CD8-positive, alpha-beta T cell (primary cell): ENCODE measurements at regions of chr1 and their contacts with region 1.

Region 1: DNA sequence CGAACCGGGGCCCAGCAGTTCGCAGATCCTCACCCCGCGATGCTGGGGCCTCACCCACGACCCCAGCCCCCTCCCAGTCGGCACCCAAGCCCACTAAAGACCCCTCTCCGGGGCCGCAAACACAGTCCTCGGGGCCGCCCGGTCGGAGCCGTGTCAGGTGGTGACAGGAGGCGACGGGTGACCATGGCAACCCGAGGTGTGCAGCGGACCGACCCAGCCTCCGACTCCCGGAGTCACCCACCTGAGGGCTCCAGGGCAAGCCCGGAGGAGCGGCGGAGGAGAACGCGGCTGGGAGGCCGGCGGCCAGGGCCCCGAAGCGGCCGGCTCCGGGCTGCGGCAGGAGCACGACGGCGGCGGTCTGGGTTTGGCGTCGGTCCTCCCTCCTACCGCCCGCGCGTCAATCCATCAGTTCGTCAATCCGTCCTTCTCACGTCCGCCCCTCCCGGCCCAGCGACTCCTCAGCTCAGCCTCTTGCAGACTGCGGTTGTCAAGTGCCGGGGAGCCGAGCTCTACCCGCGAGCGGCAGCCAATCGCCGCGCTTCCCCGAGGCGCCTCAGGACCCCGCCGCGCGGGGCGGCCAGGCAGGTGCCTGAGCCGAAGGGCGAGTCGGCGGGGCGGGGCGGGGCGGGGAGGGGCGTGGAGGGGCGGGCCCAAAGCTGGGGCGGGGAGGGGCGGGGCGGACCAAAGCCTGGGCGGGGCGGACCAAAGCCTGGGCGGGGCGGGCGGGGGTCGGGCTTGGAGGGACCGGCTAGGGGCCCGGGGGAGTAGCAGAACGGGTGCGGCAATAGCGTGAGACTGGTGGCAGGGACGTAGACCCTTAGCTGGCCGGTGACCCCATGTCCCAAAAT is at the start of gene WDR47:
- DNase-seq: peak; percentile 92 to 99 (median 96)
- ATAC-seq: peak; percentile 96
- H3K4me3 ChIP-seq: peak within 1 kb of the TSS; percentile 97 to 99
- H3K4me3 Mint-ChIP-seq: peak within 1 kb of the TSS; percentile 93
- H3K27ac ChIP-seq: peak within 1 kb of the TSS; percentile 81 to 94
- H3K27ac Mint-ChIP-seq: peak within 1 kb of the TSS; percentile 92
- H3K4me1 ChIP-seq: peaks cover 10% of the 10 kb centered on the region
- H3K4me1 Mint-ChIP-seq: peaks cover 16% of the 10 kb centered on the region
- H3K27me3 ChIP-seq: no peaks in the 10 kb centered on the region
- H3K27me3 Mint-ChIP-seq: no peaks in the 10 kb centered on the region
- CTCF ChIP-seq: no peak
- total RNA-seq, gene WDR47: 31.5 to 32.6 TPM

Region 2: DNA sequence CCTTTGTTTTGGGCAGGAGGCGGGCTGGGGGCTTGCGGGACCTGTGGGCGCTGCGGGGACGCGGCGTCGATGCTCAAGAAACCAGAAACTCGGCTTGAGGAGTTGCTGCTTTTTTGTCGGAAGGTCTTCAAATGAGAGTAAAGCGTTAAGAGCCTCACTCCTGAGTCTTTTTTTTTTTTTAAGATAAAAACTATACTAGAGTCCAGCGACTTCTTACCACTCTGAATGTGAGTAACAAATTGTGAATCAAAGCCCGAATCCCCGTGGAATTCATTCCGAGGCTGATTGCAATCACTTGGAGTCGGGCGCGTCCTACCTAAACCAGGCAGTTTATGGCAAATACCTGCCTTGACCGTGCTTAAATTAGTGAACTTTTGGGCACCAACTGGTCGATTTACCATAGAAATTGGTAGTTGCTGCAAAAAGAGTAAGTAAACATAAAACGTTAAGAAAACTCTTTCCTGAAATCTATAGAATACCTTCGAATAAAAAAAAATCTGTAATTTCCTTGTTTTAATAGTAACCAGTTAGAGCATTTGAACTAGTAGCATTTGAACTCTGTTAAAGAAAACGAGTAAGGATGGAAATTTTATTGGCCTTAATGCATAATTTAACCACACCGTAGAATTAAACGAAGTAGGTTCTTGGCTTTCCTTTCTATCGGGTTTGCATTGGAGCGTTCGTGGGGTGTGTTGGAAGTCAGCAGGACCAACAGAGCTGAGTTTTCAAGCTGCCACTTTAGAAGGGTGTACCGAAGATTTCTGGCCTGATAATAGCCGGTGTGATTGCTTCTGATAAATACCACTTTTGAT is 164.3 kb before region 1 on chr1:
- CTCF ChIA-PET with region 1: no interaction called
- POLR2A ChIA-PET with region 1: no interaction called
- intact Hi-C with region 1: loop called in 1 of 2 experiments (anchors 2 kb)
- DNase-seq: peak in 2 of 9 experiments; percentile 14 to 19
- ATAC-seq: no peak
- H3K4me3 ChIP-seq: peak overlapping the region; percentile 69 to 80
- H3K4me3 Mint-ChIP-seq: peak overlapping the region; percentile 95
- H3K27ac ChIP-seq: peak overlapping the region; percentile 18 to 24
- H3K27ac Mint-ChIP-seq: peak overlapping the region; percentile 46
- H3K4me1 ChIP-seq: peaks cover 6% of the 10 kb centered on the region
- H3K4me1 Mint-ChIP-seq: peaks cover 12% of the 10 kb centered on the region
- H3K27me3 ChIP-seq: peaks cover 0 to under 1% of the 10 kb centered on the region in 2 experiments
- H3K27me3 Mint-ChIP-seq: peaks cover 4% of the 10 kb centered on the region
- CTCF ChIP-seq: no peak

Region 3: DNA sequence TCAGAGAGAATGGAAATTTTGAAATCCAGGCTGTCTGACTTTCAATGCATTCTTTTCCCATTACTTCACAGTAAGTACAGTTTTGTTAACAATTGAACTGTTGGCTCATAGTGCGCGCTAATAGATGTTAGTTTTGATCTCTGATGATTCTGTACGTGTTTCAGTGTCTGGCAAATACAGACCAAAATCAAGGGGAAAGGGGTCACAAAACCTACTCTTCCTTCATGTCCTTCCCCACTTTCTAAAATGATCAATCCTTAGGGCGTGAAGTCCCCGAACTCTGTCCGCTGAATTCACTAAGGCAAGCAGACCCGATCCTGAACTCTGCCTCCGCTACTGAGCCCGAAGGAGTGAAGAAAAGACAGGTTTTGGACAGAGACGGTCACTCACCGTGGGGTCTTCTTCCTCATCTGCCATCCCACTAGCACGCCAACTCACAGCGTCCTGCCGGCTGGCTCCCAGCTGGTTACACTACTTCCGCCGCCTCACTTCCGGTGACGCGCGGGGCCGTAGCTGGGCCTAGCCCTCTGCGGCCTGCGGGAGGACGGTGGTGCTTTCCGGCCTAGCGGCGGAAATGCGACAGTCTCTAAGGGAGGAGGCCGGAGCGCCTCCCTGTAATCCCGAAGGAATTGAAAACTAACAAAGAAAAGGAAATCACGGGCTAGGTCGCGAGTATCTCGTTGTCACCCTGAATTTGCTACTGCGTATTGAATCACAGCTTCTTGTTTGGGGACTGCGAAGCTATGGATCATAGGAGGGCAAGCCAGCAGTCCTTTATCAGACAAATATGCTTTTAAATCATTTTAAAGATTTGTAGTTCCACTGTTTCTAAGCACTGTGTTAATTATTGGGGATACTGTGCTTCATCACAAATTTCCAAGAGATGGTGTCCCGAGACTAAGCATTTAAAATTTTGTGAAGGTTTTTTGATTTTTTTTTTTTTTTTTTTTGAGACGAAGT is 34.0 kb after region 1 on chr1 and contains the start of gene TAF13:
- CTCF ChIA-PET with region 1: no interaction called
- POLR2A ChIA-PET with region 1: interaction called, 12 read pairs
- intact Hi-C with region 1: loop called (anchors 1 kb)
- DNase-seq: peak; percentile 63 to 94 (median 86)
- ATAC-seq: peak; percentile 95
- H3K4me3 ChIP-seq: peak within 1 kb of the TSS; percentile 66 to 72
- H3K4me3 Mint-ChIP-seq: peak within 1 kb of the TSS; percentile 98
- H3K27ac ChIP-seq: peak within 1 kb of the TSS; percentile 93 to 97
- H3K27ac Mint-ChIP-seq: peak within 1 kb of the TSS; percentile 99
- H3K4me1 ChIP-seq: peaks cover 16% of the 10 kb centered on the region
- H3K4me1 Mint-ChIP-seq: peaks cover 23% of the 10 kb centered on the region
- H3K27me3 ChIP-seq: no peaks in the 10 kb centered on the region
- H3K27me3 Mint-ChIP-seq: no peaks in the 10 kb centered on the region
- CTCF ChIP-seq: no peak
- total RNA-seq, gene TAF13: 36.2 to 40.4 TPM

Region 4: GRCh38 chr1:109099938-109100773 is 58.3 kb after region 1 on chr1:
- CTCF ChIA-PET with region 1: interaction called, 7 read pairs
- POLR2A ChIA-PET with region 1: interaction called, 25 read pairs
- intact Hi-C with region 1: loop called (anchors 1 to 2 kb)
- DNase-seq: peak; percentile 95 to 98 (median 97)
- ATAC-seq: peak; percentile 91
- H3K4me3 ChIP-seq: peak overlapping the region; percentile 88 to 93
- H3K4me3 Mint-ChIP-seq: peak overlapping the region; percentile 98
- H3K27ac ChIP-seq: peak overlapping the region; percentile 86 to 93
- H3K27ac Mint-ChIP-seq: peak overlapping the region; percentile 99
- H3K4me1 ChIP-seq: peaks cover 9% of the 10 kb centered on the region
- H3K4me1 Mint-ChIP-seq: peaks cover 18% of the 10 kb centered on the region
- H3K27me3 ChIP-seq: no peaks in the 10 kb centered on the region
- H3K27me3 Mint-ChIP-seq: no peaks in the 10 kb centered on the region
- CTCF ChIP-seq: peak; percentile 83